Activated T-helper 2 cell treated with anti-CD3 and anti-CD28 coated beads, Interferon-gamma antibody, Interleukin-2, Interleukin-4, amounts not matched to agents 10 μg/mL and 5 μg/mL and 100 μg/mL, durations not matched to agents 14 hours and 24 hours and 36 hours (primary cell): ENCODE measurements at regions of chr9 and their contacts with region 1.

Region 1: GRCh38 chr9:133149126-133150107 is 14.3 kb downstream of the GBGT1 start:
- DNase-seq: peak; percentile 80
- H3K4me3 Mint-ChIP-seq: peak overlapping the region; percentile 72
- H3K27ac Mint-ChIP-seq: peak overlapping the region; percentile 74
- H3K4me1 Mint-ChIP-seq: peaks cover 22% of the 10 kb centered on the region
- H3K27me3 Mint-ChIP-seq: no peaks in the 10 kb centered on the region

Region 2: GRCh38 chr9:132944302-132945185 is 204.9 kb before region 1 on chr9 and contains the start of gene TSC1:
- intact Hi-C with region 1: no loop called
- DNase-seq: peak; percentile 94
- H3K4me3 Mint-ChIP-seq: peak within 1 kb of the TSS; percentile 83
- H3K27ac Mint-ChIP-seq: peak within 1 kb of the TSS; percentile 94
- H3K4me1 Mint-ChIP-seq: peaks cover 15% of the 10 kb centered on the region
- H3K27me3 Mint-ChIP-seq: no peaks in the 10 kb centered on the region
- total RNA-seq, gene TSC1: 29.1 and 29.8 TPM in 2 replicates

Region 3: DNA sequence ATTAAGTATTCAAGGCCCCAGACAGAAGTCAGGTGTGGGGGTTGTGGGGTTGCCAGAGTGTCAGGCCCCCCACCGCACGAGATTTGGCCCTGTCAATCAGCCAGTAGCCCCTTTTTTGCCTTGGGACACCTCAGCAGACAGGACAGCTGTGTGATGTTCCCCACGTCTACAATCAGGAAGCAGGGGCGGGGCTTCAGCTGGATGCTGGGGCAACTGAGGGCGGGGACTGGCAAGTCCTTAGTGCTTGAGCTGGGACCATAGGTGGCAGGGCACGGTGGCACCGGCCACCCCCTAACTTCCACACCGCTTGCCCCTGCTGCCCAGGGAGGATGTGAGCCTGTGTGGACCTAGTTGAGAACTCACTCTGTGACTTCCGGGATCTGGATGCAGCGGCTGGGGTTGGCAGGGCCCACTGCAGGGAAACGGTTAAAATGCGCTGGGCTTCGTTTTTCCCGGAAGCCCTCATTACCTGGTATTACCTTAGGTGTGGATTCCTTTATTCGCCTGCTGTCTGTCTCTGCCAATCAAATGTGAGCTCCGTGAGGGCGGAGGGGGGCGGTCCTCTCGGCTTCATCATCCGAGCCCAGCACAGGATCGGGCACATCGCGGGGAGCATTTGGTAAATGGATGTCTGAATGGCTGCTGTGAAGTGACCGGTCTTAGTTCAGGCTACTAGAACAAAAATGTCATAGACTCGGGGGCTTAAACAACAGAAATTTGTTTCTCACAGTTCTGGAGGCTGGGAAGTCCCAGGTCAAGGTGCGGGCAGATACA is 126.1 kb before region 1 on chr9:
- intact Hi-C with region 1: loop called (anchors 2 kb)
- DNase-seq: peak; percentile 56
- H3K4me3 Mint-ChIP-seq: peak overlapping the region; percentile 33
- H3K27ac Mint-ChIP-seq: peak overlapping the region; percentile 35
- H3K4me1 Mint-ChIP-seq: peaks cover 18% of the 10 kb centered on the region
- H3K27me3 Mint-ChIP-seq: peaks cover 1% of the 10 kb centered on the region

Region 4: GRCh38 chr9:133048569-133048968 is 100.8 kb before region 1 on chr9:
- intact Hi-C with region 1: loop called (anchors 5 kb)
- DNase-seq: no peak
- H3K4me3 Mint-ChIP-seq: no peak overlapping the region
- H3K27ac Mint-ChIP-seq: no peak overlapping the region
- H3K4me1 Mint-ChIP-seq: peaks cover 6% of the 10 kb centered on the region
- H3K27me3 Mint-ChIP-seq: no peaks in the 10 kb centered on the region

Region 5: GRCh38 chr9:133115448-133116345 is 33.7 kb before region 1 on chr9:
- intact Hi-C with region 1: loop called (anchors 1 kb)
- DNase-seq: peak; percentile 65
- H3K4me3 Mint-ChIP-seq: peak overlapping the region; percentile 54
- H3K27ac Mint-ChIP-seq: peak overlapping the region; percentile 93
- H3K4me1 Mint-ChIP-seq: peaks cover 31% of the 10 kb centered on the region
- H3K27me3 Mint-ChIP-seq: no peaks in the 10 kb centered on the region

Region 6: GRCh38 chr9:133121198-133121939 is 28.0 kb before region 1 on chr9 and contains the start of gene RALGDS:
- intact Hi-C with region 1: loop called (anchors 1 kb)
- DNase-seq: peak; percentile 80
- H3K4me3 Mint-ChIP-seq: peak within 1 kb of the TSS; percentile 80
- H3K27ac Mint-ChIP-seq: peak within 1 kb of the TSS; percentile 66
- H3K4me1 Mint-ChIP-seq: peaks cover 34% of the 10 kb centered on the region
- H3K27me3 Mint-ChIP-seq: no peaks in the 10 kb centered on the region
- total RNA-seq, gene RALGDS: 78.8 and 85.8 TPM in 2 replicates